ENCODE measurements at regions of chr3 and their contacts with region 1.

Region 1: DNA sequence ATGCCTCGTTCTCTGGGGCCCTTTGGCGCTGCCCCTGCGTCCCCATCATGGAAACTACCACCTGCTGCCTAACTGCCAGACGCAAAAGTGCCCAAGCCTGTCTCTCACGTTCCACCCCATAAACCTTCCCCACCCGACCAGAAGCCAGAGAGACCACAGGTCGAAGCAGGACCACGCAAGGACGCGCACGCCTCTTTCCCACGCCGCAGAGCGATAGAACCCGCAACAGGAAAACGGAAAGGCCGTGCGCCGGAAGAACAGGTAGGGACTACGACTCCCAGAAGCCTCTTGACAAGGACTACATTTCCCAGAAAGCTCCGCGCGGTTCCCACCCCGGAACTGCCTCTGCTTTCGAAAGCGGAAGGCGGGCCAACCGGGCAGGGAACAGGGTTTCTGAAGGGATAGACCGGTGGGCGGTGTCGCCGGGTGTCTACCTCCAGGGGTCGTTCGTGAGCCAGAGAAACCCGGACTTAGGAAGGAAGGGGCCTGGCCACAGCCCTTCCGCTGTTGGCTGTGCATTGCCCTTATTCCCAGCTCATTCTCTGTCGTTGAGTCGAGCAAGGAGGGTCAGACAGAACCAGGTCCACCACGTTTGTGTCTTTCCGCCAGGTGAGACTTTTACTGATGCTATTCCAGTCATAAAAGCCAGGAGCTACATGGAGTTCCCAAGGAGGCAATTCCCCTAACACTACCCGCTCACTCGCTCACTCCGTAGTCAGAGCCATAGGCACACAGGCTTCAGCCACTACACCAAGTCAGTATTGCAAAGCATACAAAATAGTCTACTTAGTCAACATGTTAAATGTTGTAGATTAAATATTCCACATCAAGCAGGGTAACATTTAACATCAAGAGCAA is 56.6 kb upstream of the ZBTB38 start:
- DNase-seq: peak; percentile 99
- ATAC-seq: peak; percentile 90
- H3K4me3 Mint-ChIP-seq: peak overlapping the region; percentile 81
- H3K27ac Mint-ChIP-seq: peak overlapping the region; percentile 98
- H3K4me1 Mint-ChIP-seq: peaks cover 45% of the 10 kb centered on the region
- H3K27me3 Mint-ChIP-seq: no peaks in the 10 kb centered on the region

Region 2: DNA sequence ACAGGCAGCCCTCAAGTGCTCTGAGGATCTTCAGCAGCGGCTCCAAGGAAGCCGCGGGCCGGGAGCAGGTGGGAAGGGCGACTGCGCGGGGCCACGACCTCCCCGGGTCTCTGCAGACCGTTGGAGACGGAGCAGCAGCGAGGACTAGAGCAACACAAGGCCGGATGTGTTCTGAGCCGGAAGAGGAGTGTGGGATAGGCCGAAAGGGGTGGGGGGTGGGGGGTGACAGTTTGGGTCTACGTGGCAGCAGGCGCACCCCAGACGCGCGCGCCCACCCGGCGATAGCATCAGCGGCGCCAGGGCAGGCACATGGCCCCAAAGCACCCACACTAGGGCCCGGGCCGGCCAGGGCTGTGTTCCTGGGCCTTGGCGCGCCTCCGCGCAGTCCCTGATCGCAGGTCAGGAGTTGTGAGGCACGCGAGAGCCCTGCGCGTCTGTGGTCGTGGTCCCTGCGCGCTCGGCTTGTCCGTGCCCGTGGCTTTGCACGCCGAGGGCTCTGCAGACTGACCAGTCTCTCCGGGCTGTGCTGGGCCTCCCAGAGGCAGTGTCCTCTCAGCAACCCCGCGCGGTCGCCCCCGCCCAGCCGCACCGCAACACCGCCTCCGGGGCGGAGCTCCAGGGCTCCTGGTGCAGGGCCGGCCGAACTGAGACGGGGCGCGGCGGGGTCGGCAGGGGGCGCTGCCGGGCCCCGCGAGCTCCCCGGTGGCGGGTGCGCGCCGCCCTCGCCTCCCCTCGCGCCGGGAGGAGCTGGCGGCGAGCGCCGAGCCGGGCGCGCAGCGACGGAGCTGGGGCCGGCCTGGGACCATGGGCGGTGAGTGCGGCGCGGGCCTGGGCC is 80.4 kb before region 1 on chr3 and contains the start of gene PXYLP1:
- CTCF ChIA-PET with region 1: interaction called, 12 read pairs
- POLR2A ChIA-PET with region 1: interaction called, 5 read pairs
- intact Hi-C with region 1: loop called in 1 of 2 experiments (anchors 1 kb)
- DNase-seq: peak; percentile 95
- ATAC-seq: peak; percentile 92
- H3K4me3 Mint-ChIP-seq: peak within 1 kb of the TSS; percentile 94
- H3K27ac Mint-ChIP-seq: peak within 1 kb of the TSS; percentile 98
- H3K4me1 Mint-ChIP-seq: peaks cover 48% of the 10 kb centered on the region
- H3K27me3 Mint-ChIP-seq: no peaks in the 10 kb centered on the region
- total RNA-seq, gene PXYLP1: 10.3 to 12.2 TPM

Region 3: GRCh38 chr3:141370065-141370533 is 58.4 kb after region 1 on chr3:
- CTCF ChIA-PET with region 1: interaction called, 4 read pairs
- POLR2A ChIA-PET with region 1: no interaction called
- intact Hi-C with region 1: loop called (anchors 1 kb)
- DNase-seq: peak; percentile 68
- ATAC-seq: peak; percentile 96
- H3K4me3 Mint-ChIP-seq: no peak overlapping the region
- H3K27ac Mint-ChIP-seq: peak overlapping the region; percentile 35
- H3K4me1 Mint-ChIP-seq: peaks cover 32% of the 10 kb centered on the region
- H3K27me3 Mint-ChIP-seq: no peaks in the 10 kb centered on the region

Region 4: DNA sequence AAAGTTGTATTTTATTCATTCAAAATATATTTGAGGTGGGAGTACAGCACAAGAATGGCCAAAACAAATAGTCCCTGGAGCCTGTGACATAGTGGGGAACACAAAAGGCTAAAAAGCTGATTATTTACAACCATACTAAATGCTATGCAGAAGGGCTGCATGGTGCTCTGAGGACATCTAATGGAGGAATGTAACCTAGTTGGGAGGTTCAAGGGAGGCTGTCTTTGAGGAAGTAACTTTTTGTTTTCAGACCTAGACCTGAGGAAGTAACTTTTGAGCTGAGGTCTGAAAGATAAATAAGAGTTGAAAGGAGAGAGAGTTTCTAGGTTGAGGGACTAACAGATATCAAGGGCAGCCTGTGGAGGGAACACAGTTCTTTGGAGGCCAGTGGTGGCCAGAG is 140.3 kb after region 1 on chr3:
- CTCF ChIA-PET with region 1: interaction called, 111 read pairs
- POLR2A ChIA-PET with region 1: interaction called, 4 read pairs
- intact Hi-C with region 1: loop called (anchors 1 kb)
- DNase-seq: peak; percentile 63
- ATAC-seq: peak; percentile 79
- H3K4me3 Mint-ChIP-seq: no peak overlapping the region
- H3K27ac Mint-ChIP-seq: no peak overlapping the region
- H3K4me1 Mint-ChIP-seq: peaks cover 22% of the 10 kb centered on the region
- H3K27me3 Mint-ChIP-seq: no peaks in the 10 kb centered on the region

Region 5: DNA sequence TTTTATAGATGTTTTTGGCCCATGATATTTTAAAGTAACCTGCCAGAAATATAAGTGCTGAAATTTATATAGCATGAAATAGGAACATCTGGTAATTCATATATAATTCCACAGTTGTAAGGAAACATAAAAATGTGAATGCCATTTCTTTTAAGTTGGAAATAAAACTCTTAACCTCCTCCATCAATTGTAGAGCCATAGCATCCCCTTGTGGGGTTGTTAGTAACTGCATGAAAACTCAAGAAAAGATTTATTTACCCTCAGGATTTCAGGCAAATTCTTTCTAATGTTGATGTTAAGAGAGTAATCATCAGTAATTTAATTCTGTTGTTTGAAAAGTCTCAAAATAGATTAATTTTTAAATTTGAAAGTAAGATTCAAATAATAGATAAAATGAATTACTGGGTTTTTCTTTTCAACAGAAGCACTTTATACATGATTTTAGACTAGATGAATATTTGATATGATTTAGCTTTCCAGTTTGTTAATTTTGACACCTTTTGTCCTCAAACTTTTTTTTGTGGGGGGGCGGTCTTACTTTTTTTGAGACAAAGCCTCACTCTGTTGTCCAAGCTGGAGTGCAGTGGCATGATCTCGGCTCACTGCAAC is 249.8 kb after region 1 on chr3:
- CTCF ChIA-PET with region 1: interaction called, 20 read pairs
- POLR2A ChIA-PET with region 1: no interaction called
- intact Hi-C with region 1: loop called in 1 of 2 experiments (anchors 5 kb)
- DNase-seq: peak; percentile 40
- ATAC-seq: no peak
- H3K4me3 Mint-ChIP-seq: no peak overlapping the region
- H3K27ac Mint-ChIP-seq: no peak overlapping the region
- H3K4me1 Mint-ChIP-seq: peaks cover 34% of the 10 kb centered on the region
- H3K27me3 Mint-ChIP-seq: no peaks in the 10 kb centered on the region

Region 6: GRCh38 chr3:141875374-141875892 is 563.7 kb after region 1 on chr3:
- CTCF ChIA-PET with region 1: no interaction called
- POLR2A ChIA-PET with region 1: no interaction called
- intact Hi-C with region 1: loop called in 1 of 2 experiments (anchors 2 kb)
- DNase-seq: peak; percentile 92
- ATAC-seq: peak; percentile 73
- H3K4me3 Mint-ChIP-seq: peak overlapping the region; percentile 93
- H3K27ac Mint-ChIP-seq: peak overlapping the region; percentile 91
- H3K4me1 Mint-ChIP-seq: peaks cover 23% of the 10 kb centered on the region
- H3K27me3 Mint-ChIP-seq: no peaks in the 10 kb centered on the region